ENCODE measurements at regions of chr12 and their contacts with region 1.

Region 1: GRCh38 chr12:114508529-114509129 is 102.7 kb upstream of the TBX5 start:
- DNase-seq: peak; percentile 22 to 66
- ATAC-seq: peak in 7 of 8 donors; percentile 50 to 74 (median 58)
- H3K4me3 ChIP-seq: no peak overlapping the region
- H3K27ac ChIP-seq: no peak overlapping the region
- H3K4me1 ChIP-seq: no peaks in the 10 kb centered on the region
- H3K27me3 ChIP-seq: peaks cover 0 to 71% (median 30%) of the 10 kb centered on the region in 7 donors
- CTCF ChIP-seq: peak; percentile 45 to 85 (median 77)

Region 2: DNA sequence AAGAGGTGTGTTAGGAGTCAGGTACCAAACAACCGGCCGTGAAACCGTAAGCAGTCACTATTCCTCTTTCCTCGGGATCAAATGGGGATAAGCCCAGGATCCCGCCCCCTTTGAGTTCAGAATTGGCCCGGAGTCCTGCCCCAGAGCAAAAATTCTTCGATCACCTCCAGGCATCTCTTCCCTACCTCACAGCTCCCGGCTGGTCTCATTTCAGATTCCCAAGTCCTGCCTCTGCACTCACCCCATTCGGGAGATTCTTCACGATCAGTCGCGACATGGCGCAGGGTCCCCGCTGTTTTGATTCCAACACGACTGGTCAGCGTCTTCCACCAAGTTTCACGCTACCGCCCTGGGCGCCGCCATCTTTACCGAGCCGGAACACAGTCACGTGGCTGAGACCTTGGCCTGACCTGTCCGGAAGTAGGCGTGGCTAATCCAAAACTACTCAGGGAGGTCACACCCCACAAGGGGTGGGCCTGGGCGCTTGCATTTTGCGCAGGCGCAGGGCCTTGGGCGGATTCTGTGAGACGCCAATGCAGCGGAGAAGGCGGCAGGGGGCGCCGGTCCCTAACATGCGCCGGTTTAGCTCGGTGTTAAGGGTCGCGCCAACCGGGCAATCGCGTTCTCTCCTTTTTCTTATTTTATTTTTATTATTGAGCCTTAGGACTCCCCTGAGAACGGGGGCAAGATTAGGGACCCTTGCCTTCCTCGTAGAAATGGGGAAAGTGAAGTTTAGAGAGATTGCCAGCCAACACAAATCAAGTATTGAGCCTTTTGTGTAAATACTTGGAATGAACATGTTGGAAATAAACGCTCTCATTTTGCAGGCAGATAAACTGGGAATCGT is 542.5 kb before region 1 on chr12 and contains the start of gene RBM19:
- intact Hi-C with region 1: loop called in 2 of 10 experiments (anchors 5 kb)
- DNase-seq: peak; percentile 97 to 98
- ATAC-seq: peak; percentile 100
- H3K4me3 ChIP-seq: peak within 1 kb of the TSS; percentile 50 to 94 (median 68)
- H3K27ac ChIP-seq: peak within 1 kb of the TSS; percentile 0 to 81 (median 62)
- H3K4me1 ChIP-seq: peaks cover 5 to 24% (median 13%) of the 10 kb centered on the region in 9 donors
- H3K27me3 ChIP-seq: no peaks in the 10 kb centered on the region
- CTCF ChIP-seq: peak; percentile 88 to 100 (median 94)
- total RNA-seq, gene RBM19: 13.3 to 20.9 (median 16.2) TPM

Region 3: DNA sequence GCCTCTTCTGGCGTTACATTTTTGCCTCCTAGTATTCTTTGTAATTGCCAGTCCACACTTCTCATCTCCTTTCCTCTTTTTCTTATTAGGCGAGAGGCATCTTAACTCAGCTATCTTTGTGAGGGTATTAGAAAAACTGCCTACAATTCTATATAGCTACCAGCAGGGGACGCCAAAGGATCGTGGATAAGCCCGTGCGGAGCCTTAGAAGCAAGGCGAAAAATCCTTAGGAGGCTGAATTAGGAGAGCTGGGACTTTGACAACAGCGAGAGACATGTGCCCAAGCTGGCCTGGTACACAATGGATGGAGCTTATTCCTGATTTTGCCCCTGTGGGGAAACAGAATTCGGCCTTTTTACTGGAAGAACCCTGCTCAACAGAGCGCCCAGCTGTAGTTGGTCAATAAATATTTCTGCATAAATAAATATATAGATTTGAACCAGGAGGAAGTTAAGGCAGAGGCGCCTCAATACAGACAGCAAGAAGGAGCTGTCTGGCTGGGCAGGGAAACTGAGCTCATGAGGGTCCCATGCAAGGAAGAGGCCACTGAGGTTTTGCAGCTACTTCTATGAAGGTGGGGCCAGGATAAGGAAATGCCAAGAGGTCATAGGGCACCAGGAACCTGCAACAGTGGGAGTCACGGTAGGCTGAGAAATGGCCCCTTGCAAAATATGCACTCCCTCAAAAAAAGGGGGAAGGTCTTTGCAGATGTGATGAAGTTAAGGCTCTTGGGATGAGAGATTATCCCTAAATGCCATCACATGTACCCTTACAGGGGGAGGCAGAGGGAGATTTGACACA is 527.9 kb before region 1 on chr12:
- intact Hi-C with region 1: loop called (anchors 1 to 5 kb)
- DNase-seq: no peak
- ATAC-seq: peak in 6 of 8 donors; percentile 49 to 74 (median 56)
- H3K4me3 ChIP-seq: no peak overlapping the region
- H3K27ac ChIP-seq: no peak overlapping the region
- H3K4me1 ChIP-seq: no peaks in the 10 kb centered on the region
- H3K27me3 ChIP-seq: peaks cover 0 to 66% (median 41%) of the 10 kb centered on the region in 7 donors
- CTCF ChIP-seq: peak; percentile 81 to 95 (median 85)

Region 4: DNA sequence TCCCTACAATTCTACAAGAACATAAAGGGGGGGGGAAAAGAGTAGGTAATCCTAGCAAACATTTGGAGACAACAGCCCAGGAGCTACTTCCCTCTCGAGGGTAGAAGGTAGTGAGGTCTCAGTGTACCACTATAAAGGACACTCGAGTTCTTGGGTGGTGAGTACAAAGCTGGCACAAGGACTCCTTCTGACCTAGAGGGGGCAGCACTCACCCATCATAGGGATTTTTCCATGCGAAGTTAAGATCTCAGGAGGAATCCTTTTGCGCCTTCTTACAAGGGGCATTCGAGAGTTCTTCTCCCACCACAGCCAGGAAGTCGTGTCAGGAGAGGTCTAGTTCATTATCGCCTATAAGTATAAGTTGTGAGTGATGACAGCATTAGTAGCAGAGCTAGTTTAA is 342.3 kb before region 1 on chr12:
- intact Hi-C with region 1: loop called in 6 of 10 experiments (anchors 2 to 10 kb)
- DNase-seq: peak in 1 of 2 donors; percentile 45
- ATAC-seq: peak; percentile 52 to 76 (median 66)
- H3K4me3 ChIP-seq: no peak overlapping the region
- H3K27ac ChIP-seq: no peak overlapping the region
- H3K4me1 ChIP-seq: no peaks in the 10 kb centered on the region
- H3K27me3 ChIP-seq: peaks cover 0 to 13% (median 8%) of the 10 kb centered on the region in 7 donors
- CTCF ChIP-seq: peak; percentile 33 to 80 (median 67)

Measured in heart right ventricle (tissue), 16 donors.